GM10248 (cell line): ENCODE measurements at regions of chr4 and their contacts with region 1.

Region 1: GRCh38 chr4:121668368-121669162 is 28.2 kb downstream of the ANXA5 start:
- DNase-seq: no peak
- CTCF ChIP-seq: no peak

Region 2: GRCh38 chr4:121679267-121679666 is 10.7 kb after region 1 on chr4:
- CTCF ChIA-PET with region 1: interaction called, 28 read pairs
- POLR2A ChIA-PET with region 1: no interaction called
- DNase-seq: no peak
- CTCF ChIP-seq: no peak